CD14-positive monocyte (primary cell): ENCODE measurements at regions of chr1 and their contacts with region 1.

Region 1: DNA sequence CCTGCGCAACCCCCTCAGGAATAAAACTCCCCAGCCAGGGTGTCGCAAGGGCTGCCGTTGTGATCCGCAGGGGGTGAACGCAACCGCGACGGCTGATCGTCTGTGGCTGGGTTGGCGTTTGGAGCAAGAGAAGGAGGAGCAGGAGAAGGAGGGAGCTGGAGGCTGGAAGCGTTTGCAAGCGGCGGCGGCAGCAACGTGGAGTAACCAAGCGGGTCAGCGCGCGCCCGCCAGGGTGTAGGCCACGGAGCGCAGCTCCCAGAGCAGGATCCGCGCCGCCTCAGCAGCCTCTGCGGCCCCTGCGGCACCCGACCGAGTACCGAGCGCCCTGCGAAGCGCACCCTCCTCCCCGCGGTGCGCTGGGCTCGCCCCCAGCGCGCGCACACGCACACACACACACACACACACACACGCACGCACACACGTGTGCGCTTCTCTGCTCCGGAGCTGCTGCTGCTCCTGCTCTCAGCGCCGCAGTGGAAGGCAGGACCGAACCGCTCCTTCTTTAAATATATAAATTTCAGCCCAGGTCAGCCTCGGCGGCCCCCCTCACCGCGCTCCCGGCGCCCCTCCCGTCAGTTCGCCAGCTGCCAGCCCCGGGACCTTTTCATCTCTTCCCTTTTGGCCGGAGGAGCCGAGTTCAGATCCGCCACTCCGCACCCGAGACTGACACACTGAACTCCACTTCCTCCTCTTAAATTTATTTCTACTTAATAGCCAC is 696 bp downstream of the TGFB2 start:
- DNase-seq: peak; percentile 14 to 31 (median 18)
- H3K4me3 ChIP-seq: peak overlapping the region; percentile 32 to 78 (median 39)
- H3K4me3 Mint-ChIP-seq: no peak overlapping the region
- H3K27ac ChIP-seq: no peak overlapping the region
- H3K27ac Mint-ChIP-seq: peak overlapping the region in 4 of 7 donors; percentile 9 to 33 (median 30)
- H3K4me1 ChIP-seq: peaks cover 35 to 36% of the 10 kb centered on the region in 2 donors
- H3K4me1 Mint-ChIP-seq: peaks cover 30% of the 10 kb centered on the region
- H3K27me3 ChIP-seq: peaks cover 65 to 67% of the 10 kb centered on the region in 2 donors
- H3K27me3 Mint-ChIP-seq: peaks cover 12 to 41% (median 12%) of the 10 kb centered on the region in 3 donors
- CTCF ChIP-seq: no peak

Region 2: DNA sequence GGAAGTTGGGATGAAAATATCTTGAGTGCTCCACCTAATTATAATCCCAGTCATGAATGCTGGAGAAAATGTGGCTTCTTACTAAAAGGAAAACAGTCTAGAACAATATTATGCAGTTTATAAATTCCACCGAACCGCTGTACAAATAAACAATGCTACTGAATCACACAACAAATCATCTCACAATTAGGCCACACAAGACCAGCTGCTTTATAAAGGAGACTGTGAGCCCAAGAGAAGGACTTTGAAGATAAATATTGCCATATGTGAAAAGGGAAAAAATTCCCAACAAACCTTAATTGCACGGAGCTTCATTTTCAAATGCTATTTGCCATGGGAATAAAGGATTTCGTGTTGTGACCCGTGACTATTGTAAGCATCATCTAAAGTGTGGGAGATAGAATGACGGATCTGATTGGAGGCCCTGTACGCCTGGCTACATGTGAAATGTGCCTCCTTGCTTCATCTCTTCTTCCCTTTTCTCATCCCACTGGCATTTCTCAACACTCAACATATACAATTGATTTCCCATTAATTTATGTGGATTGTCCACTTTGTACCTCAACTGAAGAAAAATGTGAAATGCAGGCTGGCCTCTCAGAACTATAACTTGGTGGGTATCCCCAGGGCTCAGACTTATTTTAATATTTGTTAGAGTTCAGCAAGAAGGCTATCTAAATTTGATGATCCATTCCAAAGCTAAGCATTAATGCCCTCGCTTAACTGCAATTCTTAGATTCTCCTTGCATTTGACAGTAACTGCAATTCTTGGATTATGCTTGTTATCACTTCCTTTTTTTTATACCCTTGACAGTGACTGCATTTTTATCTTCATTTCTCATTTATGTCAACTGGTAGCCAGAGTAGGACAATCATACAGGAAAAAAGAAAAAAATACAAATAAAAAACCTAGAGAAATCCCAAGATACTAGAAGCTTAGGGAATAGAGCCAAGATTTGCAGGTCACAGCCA is 121.6 kb after region 1 on chr1:
- intact Hi-C with region 1: loop called in 1 of 2 experiments (anchors 5 kb)
- DNase-seq: peak in 2 of 3 donors; percentile 9 to 34
- H3K4me3 ChIP-seq: no peak overlapping the region
- H3K4me3 Mint-ChIP-seq: no peak overlapping the region
- H3K27ac ChIP-seq: peak overlapping the region in 1 of 2 donors; percentile 55
- H3K27ac Mint-ChIP-seq: peak overlapping the region in 6 of 7 donors; percentile 11 to 77 (median 68)
- H3K4me1 ChIP-seq: peaks cover 38 to 44% of the 10 kb centered on the region in 2 donors
- H3K4me1 Mint-ChIP-seq: peaks cover 49% of the 10 kb centered on the region
- H3K27me3 ChIP-seq: no peaks in the 10 kb centered on the region
- H3K27me3 Mint-ChIP-seq: peaks cover 0 to 2% (median 0%) of the 10 kb centered on the region in 3 donors
- CTCF ChIP-seq: no peak

Region 3: GRCh38 chr1:218521375-218522169 is 175.7 kb after region 1 on chr1:
- intact Hi-C with region 1: loop called in 1 of 2 experiments (anchors 5 kb)
- DNase-seq: peak; percentile 37 to 59 (median 46)
- H3K4me3 ChIP-seq: no peak overlapping the region
- H3K4me3 Mint-ChIP-seq: no peak overlapping the region
- H3K27ac ChIP-seq: no peak overlapping the region
- H3K27ac Mint-ChIP-seq: peak overlapping the region in 1 of 7 donors; percentile 42
- H3K4me1 ChIP-seq: peaks cover 3 to 9% of the 10 kb centered on the region in 2 donors
- H3K4me1 Mint-ChIP-seq: peaks cover 10% of the 10 kb centered on the region
- H3K27me3 ChIP-seq: no peaks in the 10 kb centered on the region
- H3K27me3 Mint-ChIP-seq: peaks cover 0 to 13% (median 11%) of the 10 kb centered on the region in 3 donors
- CTCF ChIP-seq: peak; percentile 90

Region 4: GRCh38 chr1:219173758-219174588 is 828.1 kb after region 1 on chr1 and contains the start of gene LYPLAL1:
- intact Hi-C with region 1: loop called in 1 of 2 experiments (anchors 10 kb)
- DNase-seq: peak; percentile 88
- H3K4me3 ChIP-seq: peak within 1 kb of the TSS; percentile 56 to 83 (median 70)
- H3K4me3 Mint-ChIP-seq: peak within 1 kb of the TSS; percentile 95 to 99
- H3K27ac ChIP-seq: peak within 1 kb of the TSS; percentile 82 to 95
- H3K27ac Mint-ChIP-seq: peak within 1 kb of the TSS; percentile 94 to 100 (median 97)
- H3K4me1 ChIP-seq: peaks cover 19 to 30% of the 10 kb centered on the region in 2 donors
- H3K4me1 Mint-ChIP-seq: peaks cover 44% of the 10 kb centered on the region
- H3K27me3 ChIP-seq: no peaks in the 10 kb centered on the region
- H3K27me3 Mint-ChIP-seq: peaks cover 0 to 1% (median 0%) of the 10 kb centered on the region in 3 donors
- CTCF ChIP-seq: peak; percentile 18
- polyA plus RNA-seq, gene LYPLAL1: 10.2 to 55.9 (median 36.1) TPM

Region 5: GRCh38 chr1:219582296-219582695 is 1236.5 kb after region 1 on chr1:
- intact Hi-C with region 1: loop called in 1 of 2 experiments (anchors 10 kb)
- DNase-seq: peak; percentile 28 to 60 (median 56)
- H3K4me3 ChIP-seq: peak overlapping the region in 1 of 3 experiments; percentile 2
- H3K4me3 Mint-ChIP-seq: no peak overlapping the region
- H3K27ac ChIP-seq: peak overlapping the region in 1 of 2 donors; percentile 10
- H3K27ac Mint-ChIP-seq: peak overlapping the region in 6 of 7 donors; percentile 11 to 76 (median 60)
- H3K4me1 ChIP-seq: peaks cover 39 to 51% of the 10 kb centered on the region in 2 donors
- H3K4me1 Mint-ChIP-seq: peaks cover 47% of the 10 kb centered on the region
- H3K27me3 ChIP-seq: no peaks in the 10 kb centered on the region
- H3K27me3 Mint-ChIP-seq: peaks cover 3 to 6% (median 4%) of the 10 kb centered on the region in 3 donors
- CTCF ChIP-seq: no peak